Heart right ventricle (tissue), 16 donors: ENCODE measurements at regions of chr18 and their contacts with region 1.

Region 1: GRCh38 chr18:36067055-36067957 is at the start of gene RPRD1A:
- DNase-seq: peak; percentile 98
- ATAC-seq: peak; percentile 97 to 100 (median 98)
- H3K4me3 ChIP-seq: peak within 1 kb of the TSS; percentile 80 to 98 (median 87)
- H3K27ac ChIP-seq: peak within 1 kb of the TSS; percentile 16 to 94 (median 90)
- H3K4me1 ChIP-seq: peaks cover 0 to 32% (median 16%) of the 10 kb centered on the region in 9 donors
- H3K27me3 ChIP-seq: peaks cover 0 to 14% (median 0%) of the 10 kb centered on the region in 7 donors
- CTCF ChIP-seq: peak in 2 of 9 donors; percentile 9 to 11
- total RNA-seq, gene RPRD1A: 39.0 to 51.3 (median 49.7) TPM

Region 2: DNA sequence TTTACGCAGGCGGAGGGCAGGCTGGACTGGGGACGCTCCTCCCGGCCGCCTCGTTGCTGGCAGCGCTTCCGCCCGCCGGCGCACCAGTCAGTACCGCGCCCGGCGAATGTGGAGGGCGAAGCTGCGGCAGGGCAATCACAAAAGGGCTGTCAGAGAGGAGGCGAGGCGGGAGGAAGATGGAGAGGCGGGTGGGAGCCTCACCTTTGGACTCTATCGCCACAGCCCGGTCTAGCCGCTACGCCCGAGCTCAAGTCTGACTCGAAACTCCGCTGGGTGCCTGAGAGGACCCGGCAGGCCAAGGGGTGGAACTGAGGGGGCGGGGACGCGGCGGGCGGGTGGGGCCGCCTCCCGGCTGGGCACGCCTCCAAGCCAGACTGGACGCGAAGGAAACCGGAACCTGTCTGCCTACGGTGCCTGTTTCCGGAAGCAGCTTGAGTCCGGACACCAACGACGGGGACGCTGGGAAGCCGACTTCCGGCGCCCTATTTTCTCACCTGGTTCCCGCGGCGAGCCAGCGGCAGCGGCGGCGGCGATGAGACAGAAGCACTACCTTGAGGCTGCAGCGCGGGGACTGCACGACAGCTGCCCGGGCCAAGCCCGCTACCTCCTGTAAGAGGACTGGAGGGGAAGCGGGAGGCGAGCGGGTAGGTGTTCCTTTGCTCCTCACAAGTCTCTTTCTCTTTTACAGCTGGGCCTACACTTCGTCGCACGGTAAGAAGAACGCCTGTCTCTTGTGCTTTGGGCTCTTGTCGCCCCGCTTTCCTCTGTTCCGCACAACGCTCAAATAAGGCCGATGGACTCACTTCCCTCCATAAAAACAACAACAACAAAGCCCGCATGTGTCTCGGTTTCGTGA is 94.9 kb before region 1 on chr18 and contains the start of gene RMP24:
- intact Hi-C with region 1: loop called in 2 of 10 experiments (anchors 2 to 10 kb)
- DNase-seq: peak; percentile 94 to 95
- ATAC-seq: peak; percentile 96 to 98 (median 98)
- H3K4me3 ChIP-seq: peak within 1 kb of the TSS; percentile 57 to 96 (median 79)
- H3K27ac ChIP-seq: peak within 1 kb of the TSS; percentile 75 to 96 (median 90)
- H3K4me1 ChIP-seq: peaks cover 0 to 36% (median 21%) of the 10 kb centered on the region in 9 donors
- H3K27me3 ChIP-seq: no peaks in the 10 kb centered on the region
- CTCF ChIP-seq: peak in 1 of 9 donors; percentile 8

Region 3: DNA sequence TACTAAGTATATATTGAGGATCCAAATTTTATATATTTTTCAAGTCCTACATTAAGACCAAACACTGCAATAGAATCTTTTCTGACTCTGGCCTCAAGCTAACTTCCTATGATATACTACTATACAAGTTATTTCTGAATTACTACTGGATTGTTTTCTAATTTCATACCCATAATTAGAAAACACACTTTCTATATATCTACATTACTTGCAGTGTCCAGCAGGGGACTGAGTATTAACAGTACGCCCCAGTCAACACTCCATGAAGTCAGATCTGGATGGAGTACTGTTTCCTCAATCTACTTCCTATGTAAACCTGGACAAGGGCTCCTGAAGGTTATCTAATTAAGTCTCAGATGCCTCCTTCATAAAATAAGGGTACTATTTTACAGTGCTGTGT is 68.3 kb before region 1 on chr18:
- intact Hi-C with region 1: no loop called
- DNase-seq: no peak
- ATAC-seq: no peak
- H3K4me3 ChIP-seq: no peak overlapping the region
- H3K27ac ChIP-seq: no peak overlapping the region
- H3K4me1 ChIP-seq: peaks cover 0 to 4% (median 0%) of the 10 kb centered on the region in 9 donors
- H3K27me3 ChIP-seq: no peaks in the 10 kb centered on the region
- CTCF ChIP-seq: peak in 3 of 9 donors; percentile 8 to 29 (median 24)

Region 4: GRCh38 chr18:36031407-36031806 is 35.9 kb before region 1 on chr18:
- intact Hi-C with region 1: loop called in 1 of 10 experiments (anchors 5 kb)
- DNase-seq: no peak
- ATAC-seq: no peak
- H3K4me3 ChIP-seq: no peak overlapping the region
- H3K27ac ChIP-seq: no peak overlapping the region
- H3K4me1 ChIP-seq: peaks cover 0 to 48% (median 26%) of the 10 kb centered on the region in 9 donors
- H3K27me3 ChIP-seq: no peaks in the 10 kb centered on the region
- CTCF ChIP-seq: no peak

Region 5: DNA sequence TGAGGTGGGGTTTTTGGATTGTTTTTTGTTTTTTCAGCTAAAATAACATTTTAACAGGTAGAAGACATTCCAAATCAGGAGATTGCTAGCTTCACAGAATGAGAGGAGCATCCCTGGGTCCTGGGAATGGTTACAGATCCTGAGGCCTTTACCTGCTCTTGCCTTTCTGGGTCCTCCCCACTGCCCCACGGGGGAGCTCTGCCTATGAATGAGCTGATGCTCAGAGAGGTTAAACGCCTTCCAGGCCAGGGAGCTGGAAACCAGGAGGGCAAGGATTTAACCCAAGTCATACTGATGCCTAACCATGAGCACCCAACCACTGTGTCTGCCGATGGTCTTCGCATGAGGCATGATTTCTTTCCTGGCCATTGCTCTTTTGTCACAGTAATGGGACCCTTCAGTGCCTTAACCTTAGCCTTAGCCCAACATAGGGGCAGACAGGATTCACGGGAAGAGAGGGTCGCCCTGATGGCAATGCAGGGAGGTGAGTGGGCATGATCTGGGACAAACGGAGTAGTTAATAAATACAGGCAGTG is 136.1 kb after region 1 on chr18:
- intact Hi-C with region 1: no loop called
- DNase-seq: no peak
- ATAC-seq: no peak
- H3K4me3 ChIP-seq: no peak overlapping the region
- H3K27ac ChIP-seq: no peak overlapping the region
- H3K4me1 ChIP-seq: no peaks in the 10 kb centered on the region
- H3K27me3 ChIP-seq: no peaks in the 10 kb centered on the region
- CTCF ChIP-seq: no peak